A549 (cell line): ENCODE measurements at regions of chr7 and their contacts with region 1.

Region 1: DNA sequence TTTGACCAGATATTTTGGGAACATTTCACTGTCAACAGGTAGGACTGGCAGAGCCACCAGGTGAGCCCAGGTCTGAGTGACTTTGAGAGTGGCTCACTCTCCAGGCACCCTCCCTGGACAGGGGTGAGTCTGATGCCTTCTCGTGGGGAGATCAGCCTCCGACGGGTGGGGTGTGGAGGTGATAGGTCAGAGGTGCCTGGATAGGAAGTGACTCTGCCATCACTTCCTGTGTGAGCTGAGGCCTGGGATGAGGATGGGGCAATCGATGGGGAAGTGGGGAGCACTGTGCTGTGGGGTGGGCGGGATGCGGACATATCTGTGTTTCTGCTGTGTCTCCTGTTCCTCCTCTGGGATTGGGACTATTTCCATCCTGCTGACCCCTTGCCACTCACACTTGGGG is 34.6 kb downstream of the IFT22 start:
- DNase-seq: no peak
- ATAC-seq: no peak
- H3K4me3 ChIP-seq: no peak overlapping the region
- H3K27ac ChIP-seq: no peak overlapping the region
- H3K4me1 ChIP-seq: 0 out of 3 replicates have a peak, but pooled peaks cover 2% of the 10 kb centered on the region
- CTCF ChIP-seq: no peak
- EP300 ChIP-seq: no peak
- POLR2A ChIP-seq: no peak
- RAD21 ChIP-seq: no peak

Region 2: DNA sequence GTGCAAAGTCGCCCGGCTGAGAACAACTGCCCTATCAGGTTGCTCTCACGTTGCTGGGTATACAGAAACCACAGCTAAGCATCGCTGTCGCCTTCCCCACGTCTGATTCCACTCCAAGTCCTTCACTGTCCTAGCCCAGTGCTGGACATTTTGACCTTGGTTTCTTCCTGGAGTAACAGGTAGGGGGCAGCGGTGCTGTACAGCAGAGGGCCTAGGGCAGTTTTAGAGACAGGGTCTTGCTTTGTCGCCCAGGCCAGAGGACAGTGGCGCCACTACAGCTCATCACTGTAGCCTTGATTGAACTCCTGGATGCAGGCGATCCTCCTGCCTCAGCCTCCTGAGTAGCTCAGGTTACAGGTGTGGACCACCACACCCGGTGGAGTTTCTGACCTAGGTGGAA is 52.0 kb before region 1 on chr7:
- CTCF ChIA-PET with region 1: interaction called, 18 read pairs
- POLR2A ChIA-PET with region 1: no interaction called
- DNase-seq: peak in 1 of 2 experiments; percentile 36
- ATAC-seq: peak; percentile 30 to 47; a peak in 3 of 6 replicates
- H3K4me3 ChIP-seq: no peak overlapping the region
- H3K27ac ChIP-seq: no peak overlapping the region
- H3K4me1 ChIP-seq: peaks cover 6% of the 10 kb centered on the region; the same call in 2 of the 3 replicates
- CTCF ChIP-seq: peak; percentile 35
- EP300 ChIP-seq: no peak
- POLR2A ChIP-seq: no peak
- RAD21 ChIP-seq: 0 out of 5 replicates have a peak, but pooled peaks of 1 of the 2 experiments have one; percentile 11

Region 3: GRCh38 chr7:101251871-101252659 is 35.0 kb before region 1 on chr7:
- CTCF ChIA-PET with region 1: interaction called, 17 read pairs
- POLR2A ChIA-PET with region 1: interaction called, 11 read pairs
- DNase-seq: peak; percentile 96 to 99
- ATAC-seq: peak; percentile 99 to 100
- H3K4me3 ChIP-seq: peak overlapping the region; percentile 84
- H3K27ac ChIP-seq: peak overlapping the region; percentile 77 to 84
- H3K4me1 ChIP-seq: peaks cover 10% of the 10 kb centered on the region; the same call in 2 of the 3 replicates
- CTCF ChIP-seq: no peak
- EP300 ChIP-seq: no peak
- POLR2A ChIP-seq: peak; percentile 46
- RAD21 ChIP-seq: no peak

Region 4: GRCh38 chr7:101299511-101300464 is 12.8 kb after region 1 on chr7:
- CTCF ChIA-PET with region 1: interaction called, 19 read pairs
- POLR2A ChIA-PET with region 1: no interaction called
- DNase-seq: no peak
- ATAC-seq: peak; percentile 43 to 58; a peak in 3 of 6 replicates
- H3K4me3 ChIP-seq: no peak overlapping the region
- H3K27ac ChIP-seq: no peak overlapping the region
- H3K4me1 ChIP-seq: no peaks in the 10 kb centered on the region
- CTCF ChIP-seq: no peak
- EP300 ChIP-seq: no peak
- POLR2A ChIP-seq: no peak
- RAD21 ChIP-seq: no peak

Region 5: GRCh38 chr7:101315336-101315735 is 28.3 kb after region 1 on chr7:
- CTCF ChIA-PET with region 1: interaction called, 12 read pairs
- POLR2A ChIA-PET with region 1: no interaction called
- DNase-seq: peak; percentile 59 to 78
- ATAC-seq: peak; percentile 64 to 68; a peak in 5 of 6 replicates
- H3K4me3 ChIP-seq: no peak overlapping the region
- H3K27ac ChIP-seq: no peak overlapping the region
- H3K4me1 ChIP-seq: no peaks in the 10 kb centered on the region
- CTCF ChIP-seq: peak; percentile 80
- EP300 ChIP-seq: no peak
- POLR2A ChIP-seq: no peak
- RAD21 ChIP-seq: peak in 1 of 2 experiments; percentile 22; a peak in 2 of 5 replicates

Region 6: DNA sequence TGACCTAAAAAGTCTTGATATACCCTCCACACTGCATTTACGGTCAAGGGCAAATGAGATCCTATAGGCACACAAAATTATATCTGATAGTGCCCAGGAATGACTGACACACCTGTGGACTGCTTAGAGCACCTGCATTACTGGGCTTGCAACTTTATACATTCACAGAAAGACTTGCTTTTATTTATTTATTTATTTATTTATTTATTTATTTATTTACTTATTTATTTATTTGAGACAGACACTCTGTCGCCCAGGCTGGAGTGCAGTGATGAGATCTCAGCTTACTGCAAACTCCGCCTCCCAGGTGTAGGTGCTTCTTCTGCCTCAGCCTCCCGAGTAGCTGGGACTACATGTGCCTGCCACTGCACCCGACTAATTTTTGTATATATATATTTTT is 41.1 kb after region 1 on chr7:
- CTCF ChIA-PET with region 1: no interaction called
- POLR2A ChIA-PET with region 1: no interaction called
- DNase-seq: no peak
- ATAC-seq: no peak
- H3K4me3 ChIP-seq: no peak overlapping the region
- H3K27ac ChIP-seq: no peak overlapping the region
- H3K4me1 ChIP-seq: no peaks in the 10 kb centered on the region
- CTCF ChIP-seq: no peak
- EP300 ChIP-seq: no peak
- POLR2A ChIP-seq: no peak
- RAD21 ChIP-seq: no peak

Region 7: GRCh38 chr7:101882595-101883564 is 595.8 kb after region 1 on chr7:
- CTCF ChIA-PET with region 1: no interaction called
- POLR2A ChIA-PET with region 1: no interaction called
- DNase-seq: peak; percentile 96 to 100
- ATAC-seq: peak; percentile 92 to 94
- H3K4me3 ChIP-seq: 0 out of 3 replicates have a peak overlapping the region, but pooled peaks have one; percentile 4
- H3K27ac ChIP-seq: peak overlapping the region; percentile 96
- H3K4me1 ChIP-seq: peaks cover 89% of the 10 kb centered on the region
- CTCF ChIP-seq: peak; percentile 19; the same call in 2 of the 3 replicates
- EP300 ChIP-seq: peak; percentile 99 to 100
- POLR2A ChIP-seq: no peak
- RAD21 ChIP-seq: peak in 1 of 2 experiments; percentile 40; a peak in 4 of 5 replicates